Activated naive CD4-positive, alpha-beta T cell treated with anti-CD3 and anti-CD28 coated beads for 36 hours (primary cell): ENCODE measurements at regions of chr11 and their contacts with region 1.

Region 1: GRCh38 chr11:68297812-68298658 is 14.4 kb upstream of the LRP5 start:
- DNase-seq: peak; percentile 73
- H3K4me3 Mint-ChIP-seq: no peak overlapping the region
- H3K27ac Mint-ChIP-seq: no peak overlapping the region
- H3K4me1 Mint-ChIP-seq: no peaks in the 10 kb centered on the region
- H3K27me3 Mint-ChIP-seq: no peaks in the 10 kb centered on the region

Region 2: DNA sequence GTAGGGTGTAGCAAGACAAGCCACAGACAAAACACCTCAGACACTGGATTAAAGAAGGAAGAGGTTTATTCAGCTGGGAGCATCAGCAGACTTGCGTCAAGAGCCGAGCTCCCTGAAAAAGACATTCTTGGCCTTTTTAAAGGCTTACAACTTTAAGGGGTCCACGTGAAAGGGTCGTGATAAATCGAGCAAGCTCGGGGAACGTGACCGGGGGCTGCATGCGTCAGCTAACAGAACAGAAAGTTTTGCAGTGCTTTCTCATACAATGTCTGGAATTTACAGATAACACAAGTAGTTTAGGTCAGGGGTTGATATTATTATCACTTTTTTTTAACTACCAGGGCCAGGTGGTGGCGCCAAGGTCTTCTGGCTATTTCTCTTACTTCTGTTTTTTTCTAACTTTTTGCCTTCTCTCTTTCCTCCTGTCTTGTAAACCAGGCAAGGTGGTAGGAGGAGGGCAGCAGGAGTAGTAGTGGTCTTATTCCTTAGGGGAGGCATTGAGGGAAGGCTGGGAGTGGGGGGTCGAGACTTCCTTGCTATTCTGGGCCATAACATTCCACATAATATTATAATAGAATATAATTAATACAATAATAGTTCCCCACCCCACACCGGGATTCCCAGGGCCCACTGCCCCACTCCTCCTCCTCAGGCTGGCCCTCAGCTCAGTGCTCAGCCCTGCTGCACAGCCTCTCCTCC is 288.5 kb before region 1 on chr11:
- CTCF ChIA-PET with region 1: interaction called, 3 read pairs
- intact Hi-C with region 1: loop called (anchors 1 kb)
- DNase-seq: peak; percentile 57
- H3K4me3 Mint-ChIP-seq: no peak overlapping the region
- H3K27ac Mint-ChIP-seq: no peak overlapping the region
- H3K4me1 Mint-ChIP-seq: peaks cover 14% of the 10 kb centered on the region
- H3K27me3 Mint-ChIP-seq: peaks cover 4% of the 10 kb centered on the region

Region 3: GRCh38 chr11:68251765-68252164 is 46.3 kb before region 1 on chr11:
- CTCF ChIA-PET with region 1: interaction called, 151 read pairs
- intact Hi-C with region 1: no loop called
- DNase-seq: no peak
- H3K4me3 Mint-ChIP-seq: no peak overlapping the region
- H3K27ac Mint-ChIP-seq: no peak overlapping the region
- H3K4me1 Mint-ChIP-seq: no peaks in the 10 kb centered on the region
- H3K27me3 Mint-ChIP-seq: no peaks in the 10 kb centered on the region

Region 4: DNA sequence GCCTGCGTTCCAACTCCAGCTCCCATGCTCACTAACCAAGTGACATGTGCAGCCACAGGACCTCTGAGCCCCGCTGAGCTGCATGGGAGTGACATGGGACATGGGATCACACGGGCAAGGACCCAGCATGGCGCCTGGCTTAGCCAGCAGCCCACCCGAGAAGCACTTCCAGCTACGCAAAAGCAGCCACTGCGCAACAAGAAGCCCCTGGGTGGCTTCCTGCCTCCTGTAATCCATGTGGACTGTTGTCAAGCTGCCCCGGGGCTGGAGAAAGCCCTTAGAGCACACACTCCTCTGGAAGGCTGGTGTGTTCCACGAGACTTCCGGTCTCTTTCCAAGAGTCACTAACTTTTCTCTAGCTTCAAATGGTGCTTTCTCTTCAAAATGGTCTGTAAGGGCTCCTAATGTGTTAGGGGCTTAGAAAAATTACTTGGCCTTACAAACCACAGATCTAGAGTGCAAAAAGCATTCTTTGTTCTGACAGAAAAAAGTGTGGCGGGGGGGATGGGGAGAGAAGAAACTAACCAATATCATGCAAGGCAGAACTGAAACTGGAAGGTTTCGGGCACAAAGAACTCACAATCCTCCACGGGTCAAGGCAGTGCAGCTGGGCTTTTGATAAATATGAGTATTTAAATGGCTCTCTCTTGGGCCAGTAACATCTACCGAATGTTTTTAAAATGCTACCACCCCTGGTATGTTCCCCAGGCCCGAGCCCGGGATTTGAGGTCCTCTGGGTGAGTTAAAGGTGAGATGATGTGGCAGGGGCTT is 31.7 kb before region 1 on chr11:
- CTCF ChIA-PET with region 1: interaction called, 151 read pairs
- intact Hi-C with region 1: loop called (anchors 1 kb)
- DNase-seq: no peak
- H3K4me3 Mint-ChIP-seq: no peak overlapping the region
- H3K27ac Mint-ChIP-seq: no peak overlapping the region
- H3K4me1 Mint-ChIP-seq: peaks cover 24% of the 10 kb centered on the region
- H3K27me3 Mint-ChIP-seq: no peaks in the 10 kb centered on the region

Region 5: GRCh38 chr11:68282141-68282970 is 15.7 kb before region 1 on chr11:
- CTCF ChIA-PET with region 1: interaction called, 15 read pairs
- intact Hi-C with region 1: no loop called
- DNase-seq: peak; percentile 83
- H3K4me3 Mint-ChIP-seq: peak overlapping the region; percentile 62
- H3K27ac Mint-ChIP-seq: peak overlapping the region; percentile 79
- H3K4me1 Mint-ChIP-seq: peaks cover 26% of the 10 kb centered on the region
- H3K27me3 Mint-ChIP-seq: no peaks in the 10 kb centered on the region

Region 6: DNA sequence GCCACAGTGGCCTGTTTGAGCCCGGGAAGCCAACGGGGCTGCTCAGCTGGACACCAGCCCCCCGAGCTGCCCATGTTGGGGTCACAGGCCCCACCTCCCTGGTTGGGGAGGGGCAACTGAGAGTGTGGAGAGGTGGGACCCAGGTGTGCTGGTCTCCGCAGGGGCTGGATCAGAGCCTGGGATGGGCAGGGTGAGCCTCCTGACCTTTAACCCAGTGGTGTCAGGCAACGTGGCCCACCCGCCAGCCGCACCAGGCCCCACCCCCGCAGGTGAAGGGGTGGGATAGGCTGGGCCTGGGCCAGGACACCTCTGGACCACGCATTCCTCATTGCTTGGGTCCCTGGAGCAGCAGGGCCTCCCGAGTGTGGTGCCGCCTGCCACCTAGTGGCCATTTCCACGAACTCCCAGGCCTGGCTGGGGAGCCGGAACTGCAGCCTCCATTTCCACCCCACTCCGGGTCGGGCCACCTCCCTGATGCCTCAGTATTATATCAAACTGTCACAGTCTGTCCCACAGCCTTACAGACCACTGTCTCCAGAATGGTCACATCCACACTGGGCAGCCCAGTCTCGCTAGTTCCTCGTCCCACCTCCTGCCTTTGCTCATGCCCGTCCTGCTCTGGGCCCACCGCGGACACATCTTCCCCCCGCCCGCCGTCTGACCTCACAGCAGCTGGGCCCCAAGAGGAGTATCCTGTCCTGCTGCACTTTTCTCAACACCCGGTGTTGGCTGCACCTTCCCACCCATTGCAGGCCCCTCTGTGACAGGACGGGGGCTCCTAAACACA is 149.2 kb after region 1 on chr11:
- CTCF ChIA-PET with region 1: interaction called, 4 read pairs
- intact Hi-C with region 1: loop called (anchors 5 kb)
- DNase-seq: peak; percentile 82
- H3K4me3 Mint-ChIP-seq: no peak overlapping the region
- H3K27ac Mint-ChIP-seq: peak overlapping the region; percentile 18
- H3K4me1 Mint-ChIP-seq: peaks cover 6% of the 10 kb centered on the region
- H3K27me3 Mint-ChIP-seq: no peaks in the 10 kb centered on the region